Pancreas (tissue), 10 donors: ENCODE measurements at regions of chr12 and their contacts with region 1.

Region 1: DNA sequence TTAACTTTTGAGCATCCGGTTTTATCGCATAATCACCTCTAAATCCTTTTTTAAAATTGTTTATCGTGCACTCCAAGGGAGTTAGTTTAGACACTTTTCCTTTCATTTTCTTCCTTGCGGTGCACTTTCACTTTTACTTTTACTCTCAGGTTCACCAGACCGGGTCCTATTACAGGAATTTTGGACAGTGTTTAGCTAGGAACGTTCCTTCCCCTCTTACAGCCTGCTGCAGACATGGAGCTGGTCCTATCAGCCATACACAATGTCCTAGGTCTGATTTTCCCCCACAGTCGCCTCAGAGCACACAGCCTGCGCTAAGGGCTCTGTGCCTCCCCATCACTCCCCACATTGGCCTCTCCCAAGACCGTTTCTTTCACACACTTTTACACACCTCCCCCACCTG is 103.9 kb downstream of the ALG10 start:
- DNase-seq: no peak
- ATAC-seq: peak in 1 of 4 donors; percentile 21
- H3K4me3 ChIP-seq: peak overlapping the region in 1 of 4 donors; percentile 17
- H3K27ac ChIP-seq: no peak overlapping the region
- H3K4me1 ChIP-seq: no peaks in the 10 kb centered on the region
- H3K27me3 ChIP-seq: no peaks in the 10 kb centered on the region
- CTCF ChIP-seq: no peak

Region 2: DNA sequence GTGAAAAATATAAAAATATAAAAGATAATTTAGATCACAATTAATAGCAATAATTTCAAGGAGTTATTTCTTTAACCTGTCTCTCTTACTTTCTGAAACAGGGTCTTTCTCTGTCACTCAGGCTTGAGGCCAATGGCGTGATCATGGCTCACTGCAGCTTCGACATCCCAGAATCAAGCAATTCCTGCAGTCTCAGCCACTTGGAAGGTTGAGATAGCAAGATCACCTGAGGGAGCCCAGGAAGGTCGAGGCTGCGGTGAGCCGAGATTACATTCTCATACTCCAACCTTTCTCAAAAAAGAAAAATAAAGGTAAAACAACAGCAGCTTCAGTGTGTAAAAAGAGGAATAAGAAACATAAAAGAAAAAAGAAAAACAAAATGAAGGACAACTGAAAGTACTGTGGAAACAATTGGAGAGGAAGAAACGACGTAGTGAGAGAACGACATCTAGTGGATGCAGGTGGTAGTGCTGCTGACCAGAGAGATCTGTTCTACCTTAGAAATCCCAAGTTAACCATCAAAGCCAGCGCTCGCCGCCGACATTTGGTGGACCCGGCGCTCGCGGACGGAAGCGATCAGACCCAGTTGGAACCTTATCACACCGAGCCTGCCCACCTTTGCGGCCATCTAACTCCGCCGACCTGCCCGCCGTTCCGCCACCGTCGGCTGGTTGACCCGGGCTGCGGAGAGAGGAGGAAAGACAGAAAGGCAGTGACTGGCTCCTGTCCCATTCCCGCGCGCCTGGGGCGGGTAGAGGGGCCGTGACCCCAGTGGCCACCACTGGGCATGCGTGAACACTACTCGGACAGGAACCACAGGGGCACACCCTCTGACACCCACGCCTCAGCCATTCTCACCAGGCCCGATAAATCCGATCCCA is 92.2 kb after region 1 on chr12:
- intact Hi-C with region 1: loop called in 1 of 3 experiments (anchors 10 kb)
- DNase-seq: peak in 5 of 6 donors; percentile 50 to 79 (median 70)
- ATAC-seq: peak; percentile 86 to 97 (median 94)
- H3K4me3 ChIP-seq: peak overlapping the region; percentile 5 to 61 (median 32)
- H3K27ac ChIP-seq: peak overlapping the region in 2 of 4 donors; percentile 8 to 9
- H3K4me1 ChIP-seq: peaks cover 0 to 3% (median 0%) of the 10 kb centered on the region in 3 donors
- H3K27me3 ChIP-seq: no peaks in the 10 kb centered on the region
- CTCF ChIP-seq: peak; percentile 77 to 93 (median 84)